Activated CD4-positive, alpha-beta T cell treated with anti-CD3 and anti-CD28 coated beads, Interleukin-2, amount 10 ng/mL, durations not matched to agents 24 days and 14 days (primary cell): ENCODE measurements at regions of chr17 and their contacts with region 1.

Region 1: DNA sequence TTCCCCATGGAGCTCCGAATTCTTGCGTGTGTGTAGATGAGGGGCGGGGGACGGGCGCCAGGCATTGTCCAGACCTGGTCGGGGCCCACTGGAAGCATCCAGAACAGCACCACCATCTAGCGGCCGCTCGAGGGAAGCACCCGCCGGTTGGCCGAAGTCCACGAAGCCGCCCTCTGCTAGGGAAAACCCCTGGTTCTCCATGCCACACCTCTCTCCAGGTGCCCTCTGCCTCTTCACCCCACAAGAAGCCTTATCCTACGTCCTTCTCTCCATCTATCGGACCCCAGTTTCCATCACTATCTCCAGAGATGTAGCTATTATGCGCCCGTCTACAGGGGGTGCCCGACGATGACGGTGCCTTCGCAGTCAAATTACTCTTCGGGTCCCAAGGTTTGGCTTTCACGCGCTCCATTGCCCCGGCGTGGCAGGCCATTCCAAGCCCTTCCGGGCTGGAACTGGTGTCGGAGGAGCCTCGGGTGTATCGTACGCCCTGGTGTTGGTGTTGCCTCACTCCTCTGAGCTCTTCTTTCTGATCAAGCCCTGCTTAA is 617 bp upstream of the SENP3 start:
- DNase-seq: peak; percentile 96
- H3K4me3 Mint-ChIP-seq: peak overlapping the region; percentile 97
- H3K27ac Mint-ChIP-seq: peak overlapping the region; percentile 99
- H3K4me1 Mint-ChIP-seq: peaks cover 39% of the 10 kb centered on the region
- H3K27me3 Mint-ChIP-seq: peaks cover 2% of the 10 kb centered on the region

Region 2: GRCh38 chr17:7252176-7253043 is 308.7 kb before region 1 on chr17 and contains the start of gene ELP5:
- intact Hi-C with region 1: loop called (anchors 5 kb)
- DNase-seq: peak; percentile 97
- H3K4me3 Mint-ChIP-seq: peak within 1 kb of the TSS; percentile 95
- H3K27ac Mint-ChIP-seq: peak within 1 kb of the TSS; percentile 100
- H3K4me1 Mint-ChIP-seq: peaks cover 45% of the 10 kb centered on the region
- H3K27me3 Mint-ChIP-seq: no peaks in the 10 kb centered on the region
- total RNA-seq, gene ELP5: 74.3 and 76.8 TPM in 2 replicates

Region 3: DNA sequence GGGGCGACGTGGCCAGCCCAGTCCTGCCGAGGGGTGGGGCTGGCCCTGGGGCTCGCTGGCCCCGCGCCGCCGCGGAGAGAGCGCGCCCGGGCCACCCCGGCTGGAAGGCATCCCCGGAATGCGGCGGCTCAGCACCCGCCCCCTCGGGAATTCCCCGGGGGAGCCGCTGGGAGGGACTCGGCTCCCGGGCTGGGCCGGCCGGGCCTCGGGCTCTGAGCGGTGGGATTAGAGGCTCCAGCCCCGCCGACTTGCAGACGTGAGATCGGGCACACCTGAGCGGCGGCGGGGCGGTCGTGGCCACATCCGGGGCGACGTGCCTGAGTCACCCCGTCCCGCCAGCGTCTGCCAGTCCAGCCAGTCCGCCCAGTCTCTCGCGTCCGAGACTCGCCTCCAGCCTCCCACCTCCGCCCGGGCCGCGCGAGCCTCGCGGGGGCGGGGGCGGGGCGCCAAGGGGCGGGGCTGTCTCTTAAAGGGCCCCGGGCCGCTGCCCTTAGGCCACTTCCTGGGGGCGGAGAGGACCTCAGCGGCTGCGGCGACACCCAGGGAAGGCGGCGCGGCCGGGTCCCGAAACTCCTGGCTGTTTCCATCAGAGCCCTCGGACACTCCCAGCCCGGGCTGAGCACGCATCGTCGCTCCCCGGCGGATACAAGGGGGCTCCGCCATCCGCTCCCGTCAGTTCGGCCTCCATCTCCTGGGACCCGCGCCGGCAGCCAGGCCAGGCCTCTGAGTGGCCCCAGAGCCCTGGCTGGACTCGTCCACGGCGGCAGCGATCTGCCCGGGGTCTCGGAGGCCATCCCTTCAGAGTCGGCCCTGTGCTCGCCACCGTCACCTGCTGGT is 209.2 kb before region 1 on chr17 and contains the start of gene KCTD11:
- intact Hi-C with region 1: loop called (anchors 1 kb)
- DNase-seq: peak; percentile 94
- H3K4me3 Mint-ChIP-seq: peak within 1 kb of the TSS; percentile 88
- H3K27ac Mint-ChIP-seq: peak within 1 kb of the TSS; percentile 92
- H3K4me1 Mint-ChIP-seq: peaks cover 33% of the 10 kb centered on the region
- H3K27me3 Mint-ChIP-seq: no peaks in the 10 kb centered on the region
- total RNA-seq, gene KCTD11: 7.0 and 7.6 TPM in 2 replicates

Region 4: GRCh38 chr17:7513850-7514419 is 47.2 kb before region 1 on chr17:
- intact Hi-C with region 1: loop called (anchors 1 kb)
- DNase-seq: no peak
- H3K4me3 Mint-ChIP-seq: no peak overlapping the region
- H3K27ac Mint-ChIP-seq: no peak overlapping the region
- H3K4me1 Mint-ChIP-seq: peaks cover 15% of the 10 kb centered on the region
- H3K27me3 Mint-ChIP-seq: no peaks in the 10 kb centered on the region

Region 5: DNA sequence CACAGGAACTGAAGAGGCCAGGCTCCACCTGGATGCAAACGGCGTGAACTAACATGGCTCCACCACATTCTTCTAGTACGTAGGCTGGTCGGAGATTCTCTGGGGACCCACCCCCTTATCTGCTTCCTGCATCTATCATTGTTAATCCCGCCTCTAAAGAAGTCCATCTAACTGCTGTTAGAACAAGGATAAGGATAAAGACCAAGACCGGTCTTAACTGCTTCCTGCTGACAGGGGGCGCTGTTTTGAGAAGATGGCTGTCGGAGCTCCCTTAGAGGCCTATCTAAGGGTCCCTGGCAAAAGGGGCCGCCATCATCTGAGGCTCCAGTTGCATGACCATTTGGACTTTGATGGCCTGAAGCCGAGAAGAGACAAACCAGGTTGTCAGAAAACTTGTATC is 38.1 kb before region 1 on chr17:
- intact Hi-C with region 1: loop called (anchors 1 kb)
- DNase-seq: peak; percentile 85
- H3K4me3 Mint-ChIP-seq: no peak overlapping the region
- H3K27ac Mint-ChIP-seq: no peak overlapping the region
- H3K4me1 Mint-ChIP-seq: peaks cover 4% of the 10 kb centered on the region
- H3K27me3 Mint-ChIP-seq: no peaks in the 10 kb centered on the region

Region 6: DNA sequence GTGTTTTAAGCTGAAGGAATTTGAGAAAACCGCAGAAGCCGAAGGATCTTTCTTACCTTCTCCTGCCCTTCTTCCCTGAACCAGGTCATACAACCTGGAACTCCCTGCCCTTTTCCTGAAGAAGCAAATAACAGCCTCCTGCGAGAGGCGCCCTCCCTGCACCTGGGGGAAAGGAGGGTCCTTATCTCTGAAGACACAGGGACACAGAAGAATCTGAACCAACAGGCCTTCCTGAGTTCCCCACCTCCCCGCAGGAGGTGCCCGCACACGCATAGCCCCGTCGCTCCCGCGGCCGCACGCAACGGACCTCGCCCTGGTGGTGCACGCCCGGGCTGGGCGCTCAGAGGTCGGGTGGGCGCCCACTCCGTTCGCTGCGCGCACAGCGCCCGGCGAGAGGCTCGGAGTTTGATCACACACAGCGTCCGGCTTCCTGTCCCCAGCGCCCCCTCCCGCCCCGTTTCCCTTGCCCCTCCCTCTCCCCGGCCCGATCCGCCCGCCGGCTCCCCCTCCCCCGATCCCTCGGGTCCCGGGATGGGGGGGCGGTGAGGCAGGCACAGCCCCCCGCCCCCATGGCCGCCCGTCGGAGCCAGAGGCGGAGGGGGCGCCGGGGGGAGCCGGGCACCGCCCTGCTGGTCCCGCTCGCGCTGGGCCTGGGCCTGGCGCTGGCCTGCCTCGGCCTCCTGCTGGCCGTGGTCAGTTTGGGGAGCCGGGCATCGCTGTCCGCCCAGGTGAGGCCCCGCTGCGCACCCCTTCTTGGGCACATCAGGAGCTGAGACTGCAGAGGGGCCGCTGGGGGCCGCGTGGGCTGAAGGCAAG is 12.3 kb before region 1 on chr17 and contains the start of gene TNFSF12:
- intact Hi-C with region 1: loop called (anchors 1 kb)
- DNase-seq: peak; percentile 89
- H3K4me3 Mint-ChIP-seq: peak within 1 kb of the TSS; percentile 83
- H3K27ac Mint-ChIP-seq: peak within 1 kb of the TSS; percentile 83
- H3K4me1 Mint-ChIP-seq: peaks cover 50% of the 10 kb centered on the region
- H3K27me3 Mint-ChIP-seq: no peaks in the 10 kb centered on the region
- total RNA-seq, gene TNFSF12: 21.5 and 21.8 TPM in 2 replicates

Region 7: GRCh38 chr17:7572588-7573323 is 11.7 kb after region 1 on chr17:
- intact Hi-C with region 1: loop called (anchors 1 kb)
- DNase-seq: peak; percentile 100
- H3K4me3 Mint-ChIP-seq: peak overlapping the region; percentile 95
- H3K27ac Mint-ChIP-seq: peak overlapping the region; percentile 100
- H3K4me1 Mint-ChIP-seq: peaks cover 55% of the 10 kb centered on the region
- H3K27me3 Mint-ChIP-seq: peaks cover 2% of the 10 kb centered on the region

Region 8: GRCh38 chr17:7615265-7615747 is 54.2 kb after region 1 on chr17:
- intact Hi-C with region 1: no loop called
- DNase-seq: no peak
- H3K4me3 Mint-ChIP-seq: peak overlapping the region; percentile 77
- H3K27ac Mint-ChIP-seq: peak overlapping the region; percentile 91
- H3K4me1 Mint-ChIP-seq: peaks cover 33% of the 10 kb centered on the region
- H3K27me3 Mint-ChIP-seq: no peaks in the 10 kb centered on the region